Mammary epithelial cell (primary cell): ENCODE measurements at regions of chr16 and their contacts with region 1.

Region 1: GRCh38 chr16:10964039-10964890 is 19.9 kb downstream of the CLEC16A start:
- DNase-seq: peak; percentile 77
- H3K4me3 ChIP-seq: no peak overlapping the region
- H3K27ac ChIP-seq: no peak overlapping the region
- H3K4me1 ChIP-seq: peaks cover 16% of the 10 kb centered on the region
- H3K27me3 ChIP-seq: no peaks in the 10 kb centered on the region
- CTCF ChIP-seq: peak; percentile 96 to 99

Region 2: DNA sequence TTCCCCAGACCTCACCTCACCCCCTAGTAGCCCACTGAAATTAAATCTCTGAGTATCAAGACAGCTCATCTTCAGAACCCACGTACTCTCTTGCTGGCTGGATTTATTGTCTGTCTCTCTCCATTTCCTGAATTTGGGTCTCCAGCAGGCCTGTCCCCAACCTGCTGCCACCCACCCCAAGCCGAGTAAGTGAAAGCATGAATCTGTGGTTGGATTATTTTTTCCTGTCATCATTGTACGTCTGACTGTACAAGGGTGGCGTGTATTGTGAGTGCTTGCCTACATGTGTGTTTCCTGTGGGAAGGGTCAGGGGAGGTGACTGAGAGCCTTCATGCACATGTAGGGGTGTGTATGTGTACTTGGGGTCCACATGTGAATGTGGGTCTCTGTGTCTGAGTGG is 299.5 kb after region 1 on chr16:
- CTCF ChIA-PET with region 1: no interaction called
- dilution Hi-C with region 1: no loop called
- in situ Hi-C with region 1: loop called (anchors 5 kb)
- intact Hi-C with region 1: no loop called
- DNase-seq: no peak
- H3K4me3 ChIP-seq: no peak overlapping the region
- H3K27ac ChIP-seq: no peak overlapping the region
- H3K4me1 ChIP-seq: peaks cover 4% of the 10 kb centered on the region
- H3K27me3 ChIP-seq: no peaks in the 10 kb centered on the region
- CTCF ChIP-seq: no peak

Region 3: GRCh38 chr16:11396241-11397048 is 432.2 kb after region 1 on chr16:
- CTCF ChIA-PET with region 1: no interaction called
- dilution Hi-C with region 1: no loop called
- in situ Hi-C with region 1: loop called in 1 of 2 experiments (anchors 10 kb)
- intact Hi-C with region 1: loop called (anchors 2 kb)
- DNase-seq: peak; percentile 39
- H3K4me3 ChIP-seq: no peak overlapping the region
- H3K27ac ChIP-seq: no peak overlapping the region
- H3K4me1 ChIP-seq: no peaks in the 10 kb centered on the region
- H3K27me3 ChIP-seq: no peaks in the 10 kb centered on the region
- CTCF ChIP-seq: peak; percentile 96 to 98

Region 4: GRCh38 chr16:11560701-11561449 is 596.6 kb after region 1 on chr16:
- CTCF ChIA-PET with region 1: no interaction called
- dilution Hi-C with region 1: no loop called
- in situ Hi-C with region 1: loop called in 1 of 2 experiments (anchors 25 kb)
- intact Hi-C with region 1: no loop called
- DNase-seq: peak; percentile 92
- H3K4me3 ChIP-seq: peak overlapping the region in 1 of 3 experiments; percentile 20
- H3K27ac ChIP-seq: peak overlapping the region; percentile 92
- H3K4me1 ChIP-seq: peaks cover 37% of the 10 kb centered on the region
- H3K27me3 ChIP-seq: no peaks in the 10 kb centered on the region
- CTCF ChIP-seq: no peak

Region 5: GRCh38 chr16:11706180-11706742 is 742.0 kb after region 1 on chr16:
- CTCF ChIA-PET with region 1: no interaction called
- dilution Hi-C with region 1: no loop called
- in situ Hi-C with region 1: loop called in 1 of 2 experiments (anchors 25 kb)
- intact Hi-C with region 1: loop called (anchors 5 kb)
- DNase-seq: no peak
- H3K4me3 ChIP-seq: no peak overlapping the region
- H3K27ac ChIP-seq: no peak overlapping the region
- H3K4me1 ChIP-seq: no peaks in the 10 kb centered on the region
- H3K27me3 ChIP-seq: no peaks in the 10 kb centered on the region
- CTCF ChIP-seq: no peak